ENCODE measurements at regions of chr12 and their contacts with region 1.

Region 1: DNA sequence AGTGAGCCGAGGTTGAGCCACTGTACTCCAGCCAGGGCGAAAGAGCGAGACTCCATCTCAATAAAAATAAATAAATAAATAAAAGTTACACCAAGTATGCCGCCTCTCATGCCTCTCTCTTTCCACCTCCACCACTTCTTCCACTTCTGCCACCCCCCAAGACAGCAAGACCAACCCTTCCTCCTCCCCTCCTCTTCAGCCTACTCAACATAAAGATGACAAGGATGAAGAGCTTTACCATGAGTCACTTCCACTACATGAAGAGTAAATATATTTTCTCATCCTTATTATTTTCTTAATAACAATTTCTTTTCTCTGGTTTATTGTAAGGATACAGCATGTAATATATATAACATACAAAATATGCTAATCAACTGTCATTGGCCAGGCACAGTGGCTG is 3.6 kb upstream of the TMED2 start:
- DNase-seq: no peak
- H3K4me3 Mint-ChIP-seq: no peak overlapping the region
- H3K27ac Mint-ChIP-seq: no peak overlapping the region
- H3K4me1 Mint-ChIP-seq: peaks cover 25% of the 10 kb centered on the region
- H3K27me3 Mint-ChIP-seq: no peaks in the 10 kb centered on the region

Region 2: GRCh38 chr12:122980183-122981046 is 600.4 kb before region 1 on chr12 and contains the start of gene ARL6IP4:
- intact Hi-C with region 1: loop called (anchors 5 kb)
- DNase-seq: peak; percentile 91
- H3K4me3 Mint-ChIP-seq: peak within 1 kb of the TSS; percentile 94
- H3K27ac Mint-ChIP-seq: peak within 1 kb of the TSS; percentile 86
- H3K4me1 Mint-ChIP-seq: peaks cover 37% of the 10 kb centered on the region
- H3K27me3 Mint-ChIP-seq: no peaks in the 10 kb centered on the region
- total RNA-seq, gene ARL6IP4: 150 and 160 TPM in 2 replicates

Region 3: GRCh38 chr12:123388177-123388947 is 192.4 kb before region 1 on chr12:
- intact Hi-C with region 1: loop called (anchors 5 kb)
- DNase-seq: peak; percentile 95
- H3K4me3 Mint-ChIP-seq: peak overlapping the region; percentile 85
- H3K27ac Mint-ChIP-seq: peak overlapping the region; percentile 89
- H3K4me1 Mint-ChIP-seq: peaks cover 35% of the 10 kb centered on the region
- H3K27me3 Mint-ChIP-seq: no peaks in the 10 kb centered on the region

Region 4: GRCh38 chr12:123410041-123410412 is 170.7 kb before region 1 on chr12:
- intact Hi-C with region 1: no loop called
- DNase-seq: no peak
- H3K4me3 Mint-ChIP-seq: no peak overlapping the region
- H3K27ac Mint-ChIP-seq: no peak overlapping the region
- H3K4me1 Mint-ChIP-seq: no peaks in the 10 kb centered on the region
- H3K27me3 Mint-ChIP-seq: no peaks in the 10 kb centered on the region

Region 5: DNA sequence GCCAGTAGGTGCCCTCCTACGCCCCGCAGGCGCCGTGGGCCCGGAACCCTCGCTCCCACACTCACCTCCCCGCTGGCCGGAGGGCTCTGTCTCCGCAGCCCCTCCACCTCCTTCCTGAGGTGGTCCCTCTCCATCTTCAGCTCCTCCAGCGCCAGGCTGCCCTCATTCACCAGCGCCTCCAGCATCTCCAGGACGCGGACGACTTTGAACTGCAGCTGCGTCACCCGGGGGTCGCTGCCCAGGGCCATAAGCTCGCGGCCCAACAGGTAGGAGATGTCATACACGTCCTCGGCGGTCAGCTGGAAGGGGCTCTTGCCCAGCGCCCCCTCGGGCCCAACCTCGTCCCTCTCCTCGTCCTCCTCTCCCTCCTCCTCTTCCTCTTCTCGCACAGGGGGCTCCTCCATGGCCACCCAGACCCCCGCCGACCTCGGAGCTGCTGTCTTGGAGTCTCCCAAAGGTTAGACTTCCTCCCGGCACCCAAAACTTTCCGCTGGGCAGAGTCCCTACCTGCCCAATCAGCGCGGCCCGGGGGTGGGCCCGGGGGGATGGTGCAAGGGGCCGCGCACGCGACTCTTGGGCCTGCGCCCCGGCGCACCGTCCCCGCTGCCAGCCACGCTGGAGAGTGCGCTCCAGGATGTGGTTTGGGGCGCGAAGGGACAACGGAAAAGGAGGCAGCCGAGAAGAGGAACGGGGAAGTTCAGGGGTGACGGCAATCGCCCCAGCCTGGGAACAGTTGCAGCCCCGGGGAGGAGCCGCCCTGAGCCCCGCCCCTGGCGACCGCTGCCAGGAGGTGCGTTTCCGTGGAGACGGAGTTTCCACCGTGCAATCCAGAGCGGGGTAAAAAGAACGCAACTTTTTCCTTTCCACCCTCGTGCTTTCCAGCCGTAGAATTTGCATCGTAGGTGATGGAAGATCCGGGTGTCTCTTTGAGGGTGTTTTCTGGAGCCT is 144.5 kb before region 1 on chr12 and contains the start of gene RILPL2:
- intact Hi-C with region 1: loop called (anchors 1 kb)
- DNase-seq: peak; percentile 98
- H3K4me3 Mint-ChIP-seq: peak within 1 kb of the TSS; percentile 99
- H3K27ac Mint-ChIP-seq: peak within 1 kb of the TSS; percentile 99
- H3K4me1 Mint-ChIP-seq: peaks cover 35% of the 10 kb centered on the region
- H3K27me3 Mint-ChIP-seq: no peaks in the 10 kb centered on the region
- total RNA-seq, gene RILPL2: 17.2 TPM in 2 replicates

Region 6: GRCh38 chr12:123457980-123458783 is 122.6 kb before region 1 on chr12 and contains the start of gene SNRNP35:
- intact Hi-C with region 1: loop called (anchors 1 kb)
- DNase-seq: peak; percentile 95
- H3K4me3 Mint-ChIP-seq: peak within 1 kb of the TSS; percentile 100
- H3K27ac Mint-ChIP-seq: peak within 1 kb of the TSS; percentile 100
- H3K4me1 Mint-ChIP-seq: peaks cover 22% of the 10 kb centered on the region
- H3K27me3 Mint-ChIP-seq: no peaks in the 10 kb centered on the region
- total RNA-seq, gene SNRNP35: 30.6 and 33.4 TPM in 2 replicates

Region 7: GRCh38 chr12:123533672-123534643 is 46.8 kb before region 1 on chr12 and contains the start of gene RILPL1:
- intact Hi-C with region 1: loop called (anchors 2 kb)
- DNase-seq: peak; percentile 84
- H3K4me3 Mint-ChIP-seq: peak within 1 kb of the TSS; percentile 82
- H3K27ac Mint-ChIP-seq: peak within 1 kb of the TSS; percentile 81
- H3K4me1 Mint-ChIP-seq: peaks cover 16% of the 10 kb centered on the region
- H3K27me3 Mint-ChIP-seq: peaks cover 15% of the 10 kb centered on the region
- total RNA-seq, gene RILPL1: 4.1 and 4.6 TPM in 2 replicates

Region 8: GRCh38 chr12:123633379-123634141 is 52.8 kb after region 1 on chr12 and contains the starts of genes EIF2B1 and GTF2H3:
- intact Hi-C with region 1: loop called (anchors 1 kb)
- DNase-seq: peak; percentile 99
- H3K4me3 Mint-ChIP-seq: peak within 1 kb of the TSS; percentile 98
- H3K27ac Mint-ChIP-seq: peak within 1 kb of the TSS; percentile 93
- H3K4me1 Mint-ChIP-seq: peaks cover 17% of the 10 kb centered on the region
- H3K27me3 Mint-ChIP-seq: no peaks in the 10 kb centered on the region
- total RNA-seq, gene EIF2B1: 81.5 and 84.8 TPM in 2 replicates
- total RNA-seq, gene GTF2H3: 66.8 and 69.7 TPM in 2 replicates